ENCODE measurements at regions of chr1 and their contacts with region 1.

Region 1: GRCh38 chr1:171566467-171566866 is 55.6 kb upstream of the MYOCOS start:
- DNase-seq: no peak
- ATAC-seq: no peak
- H3K4me3 ChIP-seq: no peak overlapping the region
- H3K27ac ChIP-seq: no peak overlapping the region
- H3K4me1 ChIP-seq: no peaks in the 10 kb centered on the region
- H3K27me3 ChIP-seq: no peaks in the 10 kb centered on the region

Region 2: DNA sequence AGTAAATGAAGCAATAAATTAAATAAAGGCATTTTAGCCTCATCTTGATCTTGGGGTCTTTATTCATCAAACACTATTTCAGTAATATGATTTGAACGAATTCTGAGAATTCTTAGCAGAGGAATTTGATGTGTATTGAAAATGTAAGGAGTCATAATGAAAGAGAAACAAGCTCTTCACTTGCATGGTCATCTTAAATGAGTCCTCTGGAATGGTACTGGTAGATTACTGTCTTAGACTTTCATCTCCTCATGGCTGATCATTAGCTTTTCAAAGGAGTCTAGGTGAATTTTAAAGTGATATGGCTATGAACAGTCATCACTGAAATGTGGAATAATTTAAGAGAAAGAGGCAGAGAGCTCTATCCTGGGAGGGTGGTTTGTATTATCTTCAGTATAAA is 51.2 kb before region 1 on chr1:
- intact Hi-C with region 1: loop called in 1 of 2 experiments (anchors 10 kb)
- DNase-seq: no peak
- ATAC-seq: no peak
- H3K4me3 ChIP-seq: no peak overlapping the region
- H3K27ac ChIP-seq: no peak overlapping the region
- H3K4me1 ChIP-seq: no peaks in the 10 kb centered on the region
- H3K27me3 ChIP-seq: no peaks in the 10 kb centered on the region